Naive thymus-derived CD4-positive, alpha-beta T cell (primary cell): ENCODE measurements at regions of chr12 and their contacts with region 1.

Region 1: DNA sequence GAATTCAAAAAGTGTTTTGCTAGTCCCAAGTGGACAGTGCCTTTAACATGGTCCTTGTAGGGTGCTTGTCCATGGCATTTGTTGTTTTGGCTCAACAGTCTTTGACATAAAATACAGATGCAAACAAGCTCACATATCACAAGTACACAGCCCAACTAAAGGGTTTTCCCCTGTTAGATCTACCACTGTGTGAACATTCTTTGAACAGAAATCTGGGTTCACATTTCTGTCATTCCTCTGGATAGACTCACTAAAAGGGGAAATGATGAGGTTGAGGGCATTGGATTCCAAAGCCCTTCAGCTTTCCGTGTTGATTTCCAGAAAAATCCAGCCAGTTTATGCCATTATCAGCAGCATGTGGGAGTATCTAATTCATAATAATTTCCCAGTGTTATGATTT is 54.1 kb downstream of the EP400 start:
- DNase-seq: no peak
- ATAC-seq: no peak
- H3K4me3 ChIP-seq: no peak overlapping the region
- H3K4me3 Mint-ChIP-seq: no peak overlapping the region
- H3K27ac ChIP-seq: no peak overlapping the region
- H3K27ac Mint-ChIP-seq: no peak overlapping the region
- H3K4me1 ChIP-seq: no peaks in the 10 kb centered on the region
- H3K4me1 Mint-ChIP-seq: peaks cover 0 to 4% (median 0%) of the 10 kb centered on the region in 7 donors
- H3K27me3 ChIP-seq: no peaks in the 10 kb centered on the region
- H3K27me3 Mint-ChIP-seq: no peaks in the 10 kb centered on the region

Region 2: DNA sequence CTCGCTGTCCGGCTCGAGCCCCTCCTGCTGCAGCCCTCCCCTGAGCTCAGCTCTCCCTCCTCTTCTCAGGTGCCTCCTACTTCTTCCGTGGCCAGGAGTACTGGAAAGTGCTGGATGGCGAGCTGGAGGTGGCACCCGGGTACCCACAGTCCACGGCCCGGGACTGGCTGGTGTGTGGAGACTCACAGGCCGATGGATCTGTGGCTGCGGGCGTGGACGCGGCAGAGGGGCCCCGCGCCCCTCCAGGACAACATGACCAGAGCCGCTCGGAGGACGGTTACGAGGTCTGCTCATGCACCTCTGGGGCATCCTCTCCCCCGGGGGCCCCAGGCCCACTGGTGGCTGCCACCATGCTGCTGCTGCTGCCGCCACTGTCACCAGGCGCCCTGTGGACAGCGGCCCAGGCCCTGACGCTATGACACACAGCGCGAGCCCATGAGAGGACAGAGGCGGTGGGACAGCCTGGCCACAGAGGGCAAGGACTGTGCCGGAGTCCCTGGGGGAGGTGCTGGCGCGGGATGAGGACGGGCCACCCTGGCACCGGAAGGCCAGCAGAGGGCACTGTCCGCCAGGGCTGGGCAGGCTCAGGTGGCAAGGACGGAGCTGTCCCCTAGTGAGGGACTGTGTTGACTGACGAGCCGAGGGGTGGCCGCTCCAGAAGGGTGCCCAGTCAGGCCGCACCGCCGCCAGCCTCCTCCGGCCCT is 152.8 kb before region 1 on chr12:
- CTCF ChIA-PET with region 1: no interaction called
- POLR2A ChIA-PET with region 1: no interaction called
- intact Hi-C with region 1: loop called in 1 of 2 experiments (anchors 2 kb)
- DNase-seq: peak in 1 of 9 donors; percentile 24
- ATAC-seq: peak; percentile 69
- H3K4me3 ChIP-seq: no peak overlapping the region
- H3K4me3 Mint-ChIP-seq: no peak overlapping the region
- H3K27ac ChIP-seq: no peak overlapping the region
- H3K27ac Mint-ChIP-seq: no peak overlapping the region
- H3K4me1 ChIP-seq: no peaks in the 10 kb centered on the region
- H3K4me1 Mint-ChIP-seq: peaks cover 0 to 3% (median 0%) of the 10 kb centered on the region in 7 donors
- H3K27me3 ChIP-seq: no peaks in the 10 kb centered on the region
- H3K27me3 Mint-ChIP-seq: peaks cover 0 to 1% (median 0%) of the 10 kb centered on the region in 5 donors